ENCODE measurements at regions of chr6 and their contacts with region 1.

Region 1: DNA sequence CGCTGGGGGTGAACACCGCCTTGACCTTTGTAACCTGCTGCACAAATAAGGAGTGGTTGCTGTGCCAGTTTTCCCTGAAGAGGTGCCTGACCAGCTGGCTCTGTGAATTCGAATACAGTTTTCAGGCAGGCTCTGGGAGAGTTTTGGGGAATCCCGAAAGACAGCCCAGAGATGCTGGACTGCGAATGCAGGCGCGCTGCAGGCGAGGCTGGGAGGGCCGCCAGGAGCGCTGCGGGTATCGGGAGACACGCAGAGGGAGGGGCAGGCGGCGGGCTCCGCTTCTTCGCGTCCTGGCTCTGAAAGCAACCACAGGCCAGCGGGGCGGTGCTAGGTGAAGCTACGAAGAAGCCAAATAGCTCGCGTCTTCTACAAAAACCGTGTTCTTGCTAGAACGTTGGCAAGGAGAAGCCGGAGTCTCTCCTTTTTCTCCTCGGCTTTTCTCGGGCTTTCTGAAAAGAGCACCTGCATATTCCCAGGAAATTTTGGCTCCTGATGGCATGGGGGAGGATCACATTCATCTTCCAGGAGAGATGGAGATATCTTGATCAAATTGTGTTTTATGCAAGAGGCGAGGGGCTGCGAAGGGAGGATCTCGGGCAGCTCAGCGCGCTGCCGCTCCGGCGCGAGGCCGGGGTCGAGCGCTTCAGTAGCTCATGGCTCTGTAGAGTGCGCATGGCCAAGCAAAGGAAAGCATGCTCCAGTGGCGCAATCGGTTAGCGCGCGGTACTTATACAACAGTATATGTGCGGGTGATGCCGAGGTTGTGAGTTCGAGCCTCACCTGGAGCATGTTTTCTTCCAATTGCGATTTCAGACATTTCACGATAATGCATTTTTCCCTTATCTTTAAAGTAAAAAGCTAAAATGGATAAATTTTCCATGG is 158.1 kb upstream of the ZNF184 start:
- DNase-seq: peak; percentile 79
- H3K4me3 Mint-ChIP-seq: peak overlapping the region; percentile 85
- H3K27ac Mint-ChIP-seq: peak overlapping the region; percentile 73
- H3K4me1 Mint-ChIP-seq: no peaks in the 10 kb centered on the region
- H3K27me3 Mint-ChIP-seq: no peaks in the 10 kb centered on the region
- CTCF ChIP-seq: no peak

Region 2: DNA sequence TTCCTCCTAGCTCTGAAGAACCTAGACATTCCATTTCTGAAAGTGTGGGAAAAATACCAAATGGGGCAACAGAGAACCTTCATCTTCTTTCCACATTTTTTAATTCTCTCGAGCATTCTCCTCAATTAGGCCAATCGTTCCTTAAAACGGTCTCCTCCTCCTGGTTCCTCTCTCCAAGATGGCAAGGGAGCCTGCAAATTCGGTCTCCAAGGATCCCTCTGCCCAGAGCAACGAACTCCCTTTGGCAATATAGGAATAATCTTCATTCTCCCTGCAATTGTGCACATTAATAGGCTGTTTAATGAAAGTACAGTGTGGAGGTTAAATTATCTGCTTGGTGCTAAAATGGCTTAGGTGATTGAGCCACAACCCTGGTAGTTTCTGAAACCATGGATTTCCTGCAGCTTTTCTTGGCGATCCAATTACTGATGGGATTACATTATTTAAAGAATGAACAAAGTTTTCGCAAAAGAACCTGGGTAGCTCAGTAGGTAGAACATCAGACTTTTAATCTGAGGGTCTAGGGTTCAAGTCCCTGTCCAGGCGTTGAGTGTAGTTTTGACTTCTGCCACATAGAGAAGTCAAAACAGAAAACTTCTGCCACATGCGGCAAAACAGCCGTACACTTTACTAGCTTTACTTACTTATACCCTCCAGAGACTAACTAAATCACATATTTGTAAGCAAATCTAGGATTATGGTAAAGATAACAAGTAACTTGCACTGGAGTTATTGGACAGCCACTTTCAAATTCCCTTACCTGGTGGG is 55.2 kb before region 1 on chr6:
- CTCF ChIA-PET with region 1: no interaction called
- POLR2A ChIA-PET with region 1: no interaction called
- intact Hi-C with region 1: no loop called
- DNase-seq: peak; percentile 33
- H3K4me3 Mint-ChIP-seq: no peak overlapping the region
- H3K27ac Mint-ChIP-seq: no peak overlapping the region
- H3K4me1 Mint-ChIP-seq: no peaks in the 10 kb centered on the region
- H3K27me3 Mint-ChIP-seq: no peaks in the 10 kb centered on the region
- CTCF ChIP-seq: no peak

Region 3: GRCh38 chr6:27617700-27618689 is 13.0 kb before region 1 on chr6:
- CTCF ChIA-PET with region 1: interaction called, 11 read pairs
- POLR2A ChIA-PET with region 1: interaction called, 57 read pairs
- intact Hi-C with region 1: no loop called
- DNase-seq: peak; percentile 68
- H3K4me3 Mint-ChIP-seq: peak overlapping the region; percentile 89
- H3K27ac Mint-ChIP-seq: peak overlapping the region; percentile 86
- H3K4me1 Mint-ChIP-seq: peaks cover 6% of the 10 kb centered on the region
- H3K27me3 Mint-ChIP-seq: no peaks in the 10 kb centered on the region
- CTCF ChIP-seq: peak; percentile 9

Region 4: GRCh38 chr6:27644528-27644927 is 13.6 kb after region 1 on chr6:
- CTCF ChIA-PET with region 1: interaction called, 10 read pairs
- POLR2A ChIA-PET with region 1: no interaction called
- intact Hi-C with region 1: no loop called
- DNase-seq: no peak
- H3K4me3 Mint-ChIP-seq: no peak overlapping the region
- H3K27ac Mint-ChIP-seq: no peak overlapping the region
- H3K4me1 Mint-ChIP-seq: no peaks in the 10 kb centered on the region
- H3K27me3 Mint-ChIP-seq: no peaks in the 10 kb centered on the region
- CTCF ChIP-seq: no peak

Region 5: GRCh38 chr6:27672113-27672799 is 41.3 kb after region 1 on chr6:
- CTCF ChIA-PET with region 1: no interaction called
- POLR2A ChIA-PET with region 1: interaction called, 6 read pairs
- intact Hi-C with region 1: loop called (anchors 5 kb)
- DNase-seq: peak; percentile 84
- H3K4me3 Mint-ChIP-seq: peak overlapping the region; percentile 76
- H3K27ac Mint-ChIP-seq: peak overlapping the region; percentile 77
- H3K4me1 Mint-ChIP-seq: peaks cover 12% of the 10 kb centered on the region
- H3K27me3 Mint-ChIP-seq: no peaks in the 10 kb centered on the region
- CTCF ChIP-seq: no peak

Region 6: DNA sequence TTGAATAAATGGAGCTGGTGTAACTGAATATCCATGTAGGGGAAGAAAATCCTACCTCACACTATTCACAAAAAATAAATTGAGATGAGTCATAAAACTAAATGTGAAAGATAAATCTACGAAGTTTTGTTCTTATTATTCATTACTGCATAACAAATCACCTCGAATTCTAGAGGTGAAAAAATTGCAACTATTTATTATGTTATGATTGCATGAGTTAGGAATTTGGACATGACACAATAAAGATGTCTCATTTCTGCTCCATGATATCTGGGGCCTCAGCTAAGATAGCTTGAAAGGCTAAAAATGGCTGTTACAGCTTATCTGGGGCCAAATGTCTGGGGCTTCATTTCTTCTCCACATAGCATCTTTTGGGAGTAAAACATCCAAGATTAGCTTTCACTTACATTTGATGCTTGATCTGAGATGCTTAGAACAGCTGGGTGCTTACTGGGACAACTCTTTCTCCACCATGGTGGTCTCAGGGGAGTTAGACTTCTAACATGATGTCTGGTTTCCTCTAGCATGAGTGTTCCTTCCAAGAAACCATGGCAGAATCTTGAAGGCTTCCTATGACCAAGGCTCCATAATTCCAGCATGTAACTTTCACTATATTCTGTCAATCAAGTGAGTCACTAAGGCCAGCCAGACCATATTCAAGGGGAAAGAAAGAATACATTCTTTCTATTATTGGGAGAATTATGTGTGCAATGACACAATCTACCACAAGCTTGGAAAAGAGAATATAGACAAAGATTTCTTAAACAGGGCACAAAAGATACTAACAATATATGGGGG is 356.2 kb after region 1 on chr6:
- CTCF ChIA-PET with region 1: no interaction called
- POLR2A ChIA-PET with region 1: no interaction called
- intact Hi-C with region 1: no loop called
- DNase-seq: peak; percentile 23
- H3K4me3 Mint-ChIP-seq: no peak overlapping the region
- H3K27ac Mint-ChIP-seq: no peak overlapping the region
- H3K4me1 Mint-ChIP-seq: peaks cover 5% of the 10 kb centered on the region
- H3K27me3 Mint-ChIP-seq: peaks cover 20% of the 10 kb centered on the region
- CTCF ChIP-seq: no peak

Region 7: DNA sequence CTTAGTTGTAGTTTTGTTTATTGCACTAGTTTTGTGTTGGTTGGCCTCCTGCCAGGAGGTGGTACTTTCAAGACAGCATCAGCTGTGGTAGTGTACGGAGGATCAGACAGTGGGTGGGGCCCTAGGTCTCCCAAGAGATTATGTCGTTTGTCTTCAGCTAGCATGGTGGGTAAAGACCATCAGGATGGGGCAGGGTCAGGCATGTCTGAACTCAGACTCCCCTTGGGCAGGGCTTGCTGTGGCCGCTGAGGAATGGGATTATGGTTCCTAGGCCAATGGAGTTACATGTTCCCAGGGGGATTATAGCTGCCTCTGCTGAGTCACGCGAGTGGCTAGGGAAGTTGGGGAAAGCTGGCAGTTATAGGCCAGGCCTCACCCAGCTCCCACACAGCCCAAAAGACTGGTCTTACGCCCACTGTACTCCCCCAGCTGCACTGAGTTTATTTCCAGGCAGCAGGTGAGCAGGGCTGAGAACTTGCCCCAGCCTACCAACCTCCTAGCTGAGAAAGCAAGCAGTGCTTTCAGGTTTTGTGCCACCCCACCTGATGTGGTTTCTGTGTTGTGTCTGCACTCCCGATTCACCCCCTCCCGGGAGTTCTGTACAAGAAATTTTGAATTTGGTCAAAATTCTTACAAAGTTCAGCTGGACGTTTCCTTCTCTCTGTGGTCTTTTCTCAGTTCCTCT is 680.3 kb after region 1 on chr6:
- CTCF ChIA-PET with region 1: no interaction called
- POLR2A ChIA-PET with region 1: no interaction called
- intact Hi-C with region 1: no loop called
- DNase-seq: no peak
- H3K4me3 Mint-ChIP-seq: no peak overlapping the region
- H3K27ac Mint-ChIP-seq: no peak overlapping the region
- H3K4me1 Mint-ChIP-seq: no peaks in the 10 kb centered on the region
- H3K27me3 Mint-ChIP-seq: no peaks in the 10 kb centered on the region
- CTCF ChIP-seq: no peak